ENCODE measurements at regions of chr18 and their contacts with region 1.

Region 1: GRCh38 chr18:21111341-21112139 is at the start of gene ROCK1:
- DNase-seq: peak; percentile 59
- ATAC-seq: peak; percentile 97
- H3K4me3 ChIP-seq: peak within 1 kb of the TSS; percentile 88 to 91
- H3K27ac ChIP-seq: peak within 1 kb of the TSS; percentile 87
- H3K4me1 ChIP-seq: peaks cover 6% of the 10 kb centered on the region
- H3K27me3 ChIP-seq: no peaks in the 10 kb centered on the region
- CTCF ChIP-seq: no peak
- total RNA-seq, gene ROCK1: 36.2 TPM

Region 2: DNA sequence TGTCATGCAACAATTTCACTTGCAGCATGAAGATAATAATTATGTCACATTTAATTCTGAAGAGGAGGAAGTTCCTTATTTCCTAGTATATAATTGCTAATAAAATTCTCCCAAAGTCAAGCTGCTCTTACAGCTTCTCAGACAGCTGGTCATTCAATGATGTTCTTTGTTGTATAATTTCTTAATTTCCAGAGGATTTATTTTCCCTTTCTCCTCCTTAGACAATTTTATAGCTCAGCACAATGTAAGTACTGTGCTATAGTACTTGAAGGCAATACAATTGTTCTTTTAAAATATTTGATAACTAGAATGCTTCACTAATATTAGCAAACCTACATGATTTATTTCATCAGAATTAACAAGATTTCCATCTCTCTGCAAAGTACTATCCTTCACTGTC is 73.3 kb before region 1 on chr18:
- CTCF ChIA-PET with region 1: no interaction called
- POLR2A ChIA-PET with region 1: no interaction called
- in situ Hi-C with region 1: no loop called
- intact Hi-C with region 1: loop called (anchors 10 kb)
- DNase-seq: no peak
- ATAC-seq: no peak
- H3K4me3 ChIP-seq: no peak overlapping the region
- H3K27ac ChIP-seq: no peak overlapping the region
- H3K4me1 ChIP-seq: no peaks in the 10 kb centered on the region
- H3K27me3 ChIP-seq: no peaks in the 10 kb centered on the region
- CTCF ChIP-seq: no peak

Region 3: GRCh38 chr18:21085579-21086166 is 25.9 kb before region 1 on chr18:
- CTCF ChIA-PET with region 1: no interaction called
- POLR2A ChIA-PET with region 1: no interaction called
- in situ Hi-C with region 1: no loop called
- intact Hi-C with region 1: loop called (anchors 2 kb)
- DNase-seq: no peak
- ATAC-seq: no peak
- H3K4me3 ChIP-seq: no peak overlapping the region
- H3K27ac ChIP-seq: no peak overlapping the region
- H3K4me1 ChIP-seq: no peaks in the 10 kb centered on the region
- H3K27me3 ChIP-seq: no peaks in the 10 kb centered on the region
- CTCF ChIP-seq: no peak